Activated CD4-positive, alpha-beta memory T cell treated with anti-CD3 and anti-CD28 coated beads for 36 hours (primary cell): ENCODE measurements at regions of chr1 and their contacts with region 1.

Region 1: DNA sequence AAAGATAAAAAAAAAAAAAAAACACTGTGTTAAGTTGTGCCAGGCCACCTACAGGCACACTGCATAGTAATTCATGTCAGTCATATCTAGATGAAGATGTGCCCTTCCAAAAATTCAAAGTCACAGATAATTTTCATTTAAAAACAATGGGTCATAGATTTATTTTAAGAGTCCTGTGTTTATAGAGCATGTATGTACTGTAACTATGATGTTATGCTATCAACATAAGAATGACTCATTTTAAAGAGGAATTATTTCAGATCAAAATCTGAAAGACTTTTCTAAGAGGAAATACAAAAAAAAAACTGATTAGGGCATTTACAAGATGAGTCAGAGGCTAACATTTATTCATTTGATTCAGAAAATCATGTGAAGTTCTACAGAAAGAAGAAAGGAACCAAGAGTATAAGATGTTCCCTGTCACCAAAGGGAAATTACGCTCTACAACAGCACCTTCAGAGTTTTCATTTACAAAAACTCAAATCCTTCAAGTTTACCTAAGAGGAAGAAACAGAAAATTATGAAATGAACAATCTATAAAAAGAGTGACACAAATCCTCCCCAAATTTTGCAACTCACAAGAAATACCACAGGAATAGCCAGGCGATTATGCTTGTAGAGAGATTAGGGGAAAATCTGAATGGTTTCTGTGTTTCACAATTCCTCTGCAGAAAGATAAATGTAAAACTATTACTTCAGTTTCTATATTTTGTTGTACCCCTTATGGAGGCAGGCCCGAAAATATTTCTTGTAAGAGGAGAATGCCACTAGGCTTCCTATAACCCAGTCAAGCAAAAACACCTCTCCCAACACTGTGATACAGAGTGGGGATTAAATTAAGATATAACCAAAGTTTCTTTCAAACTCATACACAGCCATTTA is 13.8 kb downstream of the TP53BP2 start:
- DNase-seq: no peak
- H3K4me3 Mint-ChIP-seq: peak overlapping the region; percentile 54
- H3K27ac Mint-ChIP-seq: peak overlapping the region; percentile 96
- H3K4me1 Mint-ChIP-seq: peaks cover 26% of the 10 kb centered on the region
- H3K27me3 Mint-ChIP-seq: no peaks in the 10 kb centered on the region

Region 2: GRCh38 chr1:223700942-223701637 is 130.9 kb before region 1 on chr1:
- CTCF ChIA-PET with region 1: interaction called, 3 read pairs
- POLR2A ChIA-PET with region 1: no interaction called
- intact Hi-C with region 1: loop called (anchors 2 kb)
- DNase-seq: peak; percentile 52
- H3K4me3 Mint-ChIP-seq: no peak overlapping the region
- H3K27ac Mint-ChIP-seq: peak overlapping the region; percentile 65
- H3K4me1 Mint-ChIP-seq: peaks cover 35% of the 10 kb centered on the region
- H3K27me3 Mint-ChIP-seq: peaks cover 4% of the 10 kb centered on the region

Region 3: GRCh38 chr1:223771814-223772770 is 59.9 kb before region 1 on chr1:
- CTCF ChIA-PET with region 1: no interaction called
- POLR2A ChIA-PET with region 1: no interaction called
- intact Hi-C with region 1: loop called (anchors 1 kb)
- DNase-seq: peak; percentile 35
- H3K4me3 Mint-ChIP-seq: no peak overlapping the region
- H3K27ac Mint-ChIP-seq: peak overlapping the region; percentile 70
- H3K4me1 Mint-ChIP-seq: peaks cover 44% of the 10 kb centered on the region
- H3K27me3 Mint-ChIP-seq: no peaks in the 10 kb centered on the region

Region 4: DNA sequence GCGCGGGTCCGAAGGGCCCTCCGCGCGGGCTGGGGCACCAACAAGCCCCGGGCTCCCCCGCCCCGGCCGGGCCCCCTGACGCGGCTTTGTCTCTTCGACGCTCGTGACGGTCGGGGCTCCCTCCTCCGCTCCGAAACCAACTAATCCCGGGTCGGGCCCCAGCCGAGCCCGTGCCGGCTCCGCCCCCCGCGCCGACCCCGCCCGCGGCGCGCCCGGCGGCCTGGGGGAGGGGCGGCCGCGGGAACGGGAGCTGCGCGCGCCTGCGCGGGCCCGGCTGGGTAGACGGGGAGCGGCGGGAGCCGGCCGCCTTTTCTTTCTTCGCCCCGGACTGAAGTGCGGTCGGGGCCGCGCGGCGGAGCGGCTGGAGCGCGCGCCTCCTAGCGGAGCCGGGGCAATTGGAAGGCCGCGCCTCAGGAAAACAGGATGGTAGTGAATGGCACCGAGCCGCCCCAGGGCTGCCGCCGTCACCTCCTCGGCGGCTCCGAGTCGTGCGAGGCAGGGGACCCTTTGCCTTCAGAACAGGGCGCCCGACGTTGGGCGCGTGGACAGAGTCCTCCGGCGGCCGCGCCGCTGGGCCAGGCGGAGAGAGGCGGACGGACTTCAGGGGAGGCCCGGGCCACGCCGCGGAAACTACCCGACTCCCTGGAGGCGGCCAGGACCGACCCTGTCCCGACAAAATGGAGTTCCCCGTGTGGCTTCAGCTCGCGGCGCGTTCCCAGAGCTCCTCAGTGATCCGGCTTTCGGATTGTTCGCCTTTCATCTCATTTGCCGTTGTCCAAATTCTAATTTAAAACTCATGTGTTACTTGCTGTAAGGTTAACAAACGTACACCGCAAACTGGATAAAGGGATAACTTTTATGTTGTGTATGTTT is 14.1 kb after region 1 on chr1 and contains the start of gene TP53BP2:
- CTCF ChIA-PET with region 1: interaction called, 14 read pairs
- POLR2A ChIA-PET with region 1: interaction called, 119 read pairs
- intact Hi-C with region 1: loop called (anchors 1 kb)
- DNase-seq: peak; percentile 88
- H3K4me3 Mint-ChIP-seq: peak within 1 kb of the TSS; percentile 98
- H3K27ac Mint-ChIP-seq: peak within 1 kb of the TSS; percentile 100
- H3K4me1 Mint-ChIP-seq: peaks cover 45% of the 10 kb centered on the region
- H3K27me3 Mint-ChIP-seq: no peaks in the 10 kb centered on the region
- total RNA-seq, gene TP53BP2: 56.0 to 58.7 TPM

Region 5: DNA sequence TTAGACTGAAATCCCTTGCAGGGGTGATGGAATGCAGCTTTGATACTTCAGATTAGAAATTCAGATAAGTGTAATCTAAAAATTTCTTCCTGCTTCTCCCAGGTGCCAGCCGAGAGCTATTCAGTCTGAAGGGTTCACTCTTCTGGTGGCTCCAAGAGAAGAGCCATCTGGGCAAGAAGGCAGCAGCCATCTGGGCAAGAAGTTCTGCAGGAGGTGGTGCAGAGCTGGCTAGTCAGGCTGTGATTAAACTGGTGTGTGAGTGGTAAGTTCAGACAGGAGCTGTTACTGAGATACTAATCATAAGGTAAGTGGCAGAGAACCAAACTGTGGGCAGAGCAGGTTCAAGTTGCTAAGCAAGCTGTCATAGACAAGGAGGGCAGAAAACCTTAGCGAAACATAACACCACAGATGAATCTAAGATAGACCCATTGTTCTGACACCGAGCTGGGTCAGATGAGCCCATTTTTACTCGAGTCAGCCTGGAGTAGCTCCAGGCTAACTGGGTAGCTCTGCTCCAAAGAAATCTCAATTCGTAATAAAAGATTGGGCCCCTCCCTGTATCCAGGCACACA is 28.1 kb after region 1 on chr1:
- CTCF ChIA-PET with region 1: no interaction called
- POLR2A ChIA-PET with region 1: no interaction called
- intact Hi-C with region 1: no loop called
- DNase-seq: no peak
- H3K4me3 Mint-ChIP-seq: no peak overlapping the region
- H3K27ac Mint-ChIP-seq: no peak overlapping the region
- H3K4me1 Mint-ChIP-seq: no peaks in the 10 kb centered on the region
- H3K27me3 Mint-ChIP-seq: peaks cover 3% of the 10 kb centered on the region

Region 6: DNA sequence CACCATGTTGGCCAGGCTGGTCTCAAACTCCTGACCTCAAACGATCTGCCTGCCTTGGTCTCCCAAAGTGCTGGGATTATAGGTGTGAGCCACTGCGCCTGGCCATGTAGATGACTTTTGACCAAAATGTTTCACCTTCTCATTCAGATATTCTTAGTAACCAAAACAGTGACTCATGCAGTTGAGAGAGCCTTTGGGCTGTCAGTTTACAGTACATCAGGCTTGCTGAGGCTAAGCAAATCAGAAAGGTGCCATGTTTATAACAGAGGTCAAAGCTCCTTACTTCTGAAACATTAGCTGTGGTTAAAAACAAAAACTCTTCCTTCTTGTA is 545.6 kb after region 1 on chr1:
- CTCF ChIA-PET with region 1: no interaction called
- POLR2A ChIA-PET with region 1: no interaction called
- intact Hi-C with region 1: loop called (anchors 5 kb)
- DNase-seq: peak; percentile 67
- H3K4me3 Mint-ChIP-seq: no peak overlapping the region
- H3K27ac Mint-ChIP-seq: peak overlapping the region; percentile 46
- H3K4me1 Mint-ChIP-seq: peaks cover 91% of the 10 kb centered on the region
- H3K27me3 Mint-ChIP-seq: no peaks in the 10 kb centered on the region

Region 7: GRCh38 chr1:225441314-225442122 is 1609.5 kb after region 1 on chr1:
- CTCF ChIA-PET with region 1: no interaction called
- POLR2A ChIA-PET with region 1: no interaction called
- intact Hi-C with region 1: loop called (anchors 10 kb)
- DNase-seq: no peak
- H3K4me3 Mint-ChIP-seq: no peak overlapping the region
- H3K27ac Mint-ChIP-seq: peak overlapping the region; percentile 64
- H3K4me1 Mint-ChIP-seq: peaks cover 46% of the 10 kb centered on the region
- H3K27me3 Mint-ChIP-seq: no peaks in the 10 kb centered on the region